ENCODE measurements at regions of chr19 and their contacts with region 1.

Region 1: DNA sequence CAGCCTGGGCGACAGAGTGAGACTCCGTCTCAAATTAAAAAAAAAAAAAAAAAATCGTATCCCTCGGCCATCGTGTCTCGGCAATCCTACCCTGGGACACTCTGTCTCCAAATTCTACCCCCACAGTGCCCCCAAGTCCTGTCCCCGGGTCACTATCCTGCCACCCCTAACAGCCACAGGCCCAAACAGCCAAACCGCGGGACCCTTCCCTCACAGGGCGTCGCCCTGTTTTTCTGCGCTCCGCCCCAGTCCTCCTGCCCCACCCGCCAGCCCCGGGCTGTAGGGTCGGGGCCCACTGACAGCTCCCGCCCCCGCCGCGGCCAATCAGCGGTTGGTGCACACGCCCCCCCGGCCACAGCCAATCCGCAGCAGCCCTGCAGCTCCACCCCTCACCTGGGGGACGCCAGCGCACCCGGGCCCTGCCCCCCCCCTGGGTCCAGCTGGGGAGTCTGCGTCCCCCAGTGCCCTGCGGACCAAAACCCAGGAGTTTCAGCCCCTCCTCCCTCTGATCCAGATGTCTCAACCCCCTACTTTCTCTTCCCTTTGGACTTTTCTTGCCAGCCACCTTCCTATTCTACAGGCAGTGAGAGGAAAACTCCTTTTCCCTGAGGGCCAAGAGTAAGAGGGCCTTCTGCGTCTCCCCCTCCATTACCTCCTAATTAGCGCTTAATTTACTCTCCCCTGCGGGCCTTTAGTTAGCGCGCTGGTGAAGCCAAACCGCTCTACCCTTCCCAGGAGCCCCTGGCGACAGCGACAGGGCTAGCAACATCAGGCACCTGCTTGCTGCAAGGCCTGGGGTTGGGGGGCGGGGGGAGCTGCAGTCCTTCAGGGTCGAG is 1.5 kb upstream of the BCAT2 start:
- DNase-seq: peak; percentile 46
- H3K4me3 ChIP-seq: peak overlapping the region; percentile 27 to 41 (median 29)
- H3K27ac ChIP-seq: no peak overlapping the region
- H3K4me1 ChIP-seq: peaks cover 8% of the 10 kb centered on the region
- H3K27me3 ChIP-seq: no peaks in the 10 kb centered on the region
- CTCF ChIP-seq: no peak

Region 2: GRCh38 chr19:48760504-48761205 is 51.7 kb before region 1 on chr19:
- CTCF ChIA-PET with region 1: no interaction called
- dilution Hi-C with region 1: loop called (anchors 5 kb)
- in situ Hi-C with region 1: no loop called
- intact Hi-C with region 1: no loop called
- DNase-seq: no peak
- H3K4me3 ChIP-seq: no peak overlapping the region
- H3K27ac ChIP-seq: no peak overlapping the region
- H3K4me1 ChIP-seq: no peaks in the 10 kb centered on the region
- H3K27me3 ChIP-seq: peaks cover 2% of the 10 kb centered on the region
- CTCF ChIP-seq: no peak